ENCODE measurements at regions of chr1 and their contacts with region 1.

Region 1: DNA sequence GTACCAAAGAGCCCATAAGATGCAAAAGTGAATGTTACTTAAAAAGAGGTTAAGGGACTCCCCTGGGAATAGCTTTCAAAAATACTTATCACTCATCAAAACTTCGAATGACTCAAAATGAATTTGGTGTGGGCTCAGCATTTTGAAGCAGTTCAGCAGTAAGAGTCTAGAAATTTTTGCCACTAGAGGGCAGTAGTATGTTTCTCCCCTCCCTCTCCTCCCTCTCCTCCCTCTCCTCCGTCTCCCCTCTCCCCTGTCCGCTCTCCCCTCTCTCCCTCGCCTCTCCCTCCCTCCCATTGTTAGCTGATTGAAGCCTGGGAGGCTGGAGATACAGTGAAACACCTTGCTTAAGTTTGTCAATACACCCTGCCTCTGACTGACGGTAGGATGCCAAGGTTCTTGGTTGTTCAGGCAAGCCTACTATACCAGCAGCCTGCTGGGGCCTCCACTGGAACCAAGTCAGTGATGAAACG is 70.8 kb upstream of the TENT5C start:
- DNase-seq: peak; percentile 36
- H3K4me3 Mint-ChIP-seq: no peak overlapping the region
- H3K27ac Mint-ChIP-seq: no peak overlapping the region
- H3K4me1 Mint-ChIP-seq: peaks cover 3% of the 10 kb centered on the region
- H3K27me3 Mint-ChIP-seq: no peaks in the 10 kb centered on the region

Region 2: GRCh38 chr1:117555806-117556205 is 20.8 kb after region 1 on chr1:
- CTCF ChIA-PET with region 1: interaction called, 16 read pairs
- POLR2A ChIA-PET with region 1: no interaction called
- DNase-seq: no peak
- H3K4me3 Mint-ChIP-seq: no peak overlapping the region
- H3K27ac Mint-ChIP-seq: no peak overlapping the region
- H3K4me1 Mint-ChIP-seq: peaks cover 2% of the 10 kb centered on the region
- H3K27me3 Mint-ChIP-seq: peaks cover 8% of the 10 kb centered on the region

Region 3: GRCh38 chr1:117632269-117633067 is 97.4 kb after region 1 on chr1:
- CTCF ChIA-PET with region 1: interaction called, 10 read pairs
- POLR2A ChIA-PET with region 1: no interaction called
- DNase-seq: no peak
- H3K4me3 Mint-ChIP-seq: no peak overlapping the region
- H3K27ac Mint-ChIP-seq: peak overlapping the region; percentile 67
- H3K4me1 Mint-ChIP-seq: peaks cover 65% of the 10 kb centered on the region
- H3K27me3 Mint-ChIP-seq: no peaks in the 10 kb centered on the region

Region 4: GRCh38 chr1:117664314-117664713 is 129.3 kb after region 1 on chr1:
- CTCF ChIA-PET with region 1: interaction called, 11 read pairs
- POLR2A ChIA-PET with region 1: interaction called, 7 read pairs
- DNase-seq: peak; percentile 76
- H3K4me3 Mint-ChIP-seq: peak overlapping the region; percentile 8
- H3K27ac Mint-ChIP-seq: peak overlapping the region; percentile 92
- H3K4me1 Mint-ChIP-seq: peaks cover 82% of the 10 kb centered on the region
- H3K27me3 Mint-ChIP-seq: no peaks in the 10 kb centered on the region

Region 5: DNA sequence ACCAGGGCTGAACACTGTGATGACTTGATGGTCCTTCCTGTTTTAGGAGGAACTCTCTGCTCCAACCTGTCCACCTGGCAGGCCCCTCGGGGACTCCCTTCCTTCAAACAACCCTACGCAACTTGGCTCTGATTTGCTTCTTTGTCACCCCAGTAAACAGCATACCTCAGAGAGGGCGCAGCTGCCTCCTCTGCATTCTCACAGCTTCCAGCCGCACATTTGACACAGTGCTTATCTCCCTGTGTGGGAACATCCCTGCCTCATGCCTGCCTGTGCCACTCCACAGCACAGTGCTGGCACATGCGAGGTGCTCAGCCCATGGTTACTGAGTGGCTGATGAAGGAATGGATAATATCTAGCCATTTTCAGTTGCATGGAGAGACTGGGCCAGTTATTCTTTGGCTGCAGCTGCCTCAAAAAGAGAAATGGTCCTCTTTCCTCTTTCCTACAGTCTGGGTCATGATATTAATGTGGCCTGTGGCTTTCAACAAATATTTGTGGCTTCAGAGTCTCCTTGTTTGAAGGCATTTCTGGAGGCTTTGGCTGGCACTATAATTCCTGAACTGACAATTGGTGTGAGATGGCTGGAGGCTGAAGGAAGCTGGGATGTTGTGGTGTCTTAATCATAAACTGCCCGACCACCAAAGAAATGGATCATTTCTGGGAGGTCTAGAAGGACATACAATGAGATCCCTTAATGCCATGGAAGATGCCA is 148.7 kb after region 1 on chr1:
- CTCF ChIA-PET with region 1: interaction called, 15 read pairs
- POLR2A ChIA-PET with region 1: no interaction called
- DNase-seq: no peak
- H3K4me3 Mint-ChIP-seq: no peak overlapping the region
- H3K27ac Mint-ChIP-seq: no peak overlapping the region
- H3K4me1 Mint-ChIP-seq: peaks cover 1% of the 10 kb centered on the region
- H3K27me3 Mint-ChIP-seq: peaks cover 2% of the 10 kb centered on the region

Region 6: DNA sequence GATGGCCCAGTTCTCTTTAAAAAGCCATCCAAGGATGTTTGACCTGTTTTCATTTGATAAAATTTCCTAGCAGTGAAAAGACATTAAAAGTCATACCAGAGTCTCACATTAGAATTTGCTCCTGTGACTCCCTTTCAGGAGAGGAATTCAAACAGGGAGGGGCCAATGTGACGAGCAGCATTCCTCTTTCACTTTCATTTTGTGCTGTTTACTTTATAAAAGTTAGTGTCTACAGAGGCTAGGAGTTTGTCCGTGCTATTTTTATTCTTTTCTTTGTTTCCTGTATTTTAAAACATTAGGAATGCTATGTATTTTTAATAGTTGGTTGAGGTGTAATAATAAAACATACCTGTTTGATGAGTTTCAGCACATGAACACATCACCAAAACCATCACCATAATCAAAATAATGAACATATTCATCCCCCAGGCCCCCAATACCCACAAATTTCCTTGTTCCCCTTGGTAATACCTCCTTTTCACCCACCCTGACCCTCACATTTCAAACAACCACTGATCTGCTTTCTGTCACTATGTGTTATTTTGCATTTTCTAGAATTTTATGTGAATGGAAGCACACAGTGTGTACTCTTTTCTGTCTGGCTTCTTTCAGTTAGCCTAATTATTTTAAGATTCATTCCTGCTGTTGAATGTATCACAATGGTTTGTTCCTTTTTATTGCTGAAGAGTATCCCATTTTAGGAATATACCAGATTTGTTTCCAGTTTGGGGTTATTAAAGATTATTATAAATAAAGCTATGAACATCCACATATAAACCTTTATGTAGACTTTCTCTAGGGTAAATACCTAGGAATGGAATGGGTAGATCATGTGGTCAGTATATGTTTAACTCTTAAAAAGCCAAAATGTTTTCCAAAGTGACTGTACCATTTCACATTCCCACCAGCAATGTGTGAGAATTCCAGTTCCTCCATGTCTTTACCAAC is 200.3 kb after region 1 on chr1:
- CTCF ChIA-PET with region 1: interaction called, 12 read pairs
- POLR2A ChIA-PET with region 1: no interaction called
- DNase-seq: peak; percentile 52
- H3K4me3 Mint-ChIP-seq: peak overlapping the region; percentile 72
- H3K27ac Mint-ChIP-seq: peak overlapping the region; percentile 76
- H3K4me1 Mint-ChIP-seq: peaks cover 10% of the 10 kb centered on the region
- H3K27me3 Mint-ChIP-seq: no peaks in the 10 kb centered on the region

Region 7: GRCh38 chr1:117814856-117815797 is 280.1 kb after region 1 on chr1:
- CTCF ChIA-PET with region 1: no interaction called
- POLR2A ChIA-PET with region 1: no interaction called
- DNase-seq: no peak
- H3K4me3 Mint-ChIP-seq: no peak overlapping the region
- H3K27ac Mint-ChIP-seq: no peak overlapping the region
- H3K4me1 Mint-ChIP-seq: peaks cover 2% of the 10 kb centered on the region
- H3K27me3 Mint-ChIP-seq: no peaks in the 10 kb centered on the region